Breast epithelium (tissue), 4 donors: ENCODE measurements at regions of chr16 and their contacts with region 1.

Region 1: DNA sequence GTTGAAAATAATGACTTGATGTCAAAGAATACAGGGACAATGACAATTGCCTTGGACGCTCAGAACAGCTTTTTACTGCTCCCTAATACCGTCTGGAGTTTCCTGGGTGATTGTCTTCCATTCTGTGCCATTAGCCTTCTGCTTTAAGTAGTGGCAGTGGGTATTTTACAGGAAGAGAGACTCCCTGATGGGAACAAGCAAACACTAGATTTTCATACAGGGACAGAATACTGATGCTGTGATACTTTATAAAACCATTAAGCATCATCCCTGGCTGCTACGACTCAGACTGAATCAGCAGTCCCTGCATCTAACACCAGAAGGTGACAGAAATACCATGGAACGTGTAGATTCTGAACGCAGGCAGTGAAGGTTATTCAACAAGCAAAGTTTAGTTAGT is 635.4 kb upstream of the GOT2 start:
- DNase-seq: no peak
- H3K4me3 ChIP-seq: no peak overlapping the region
- H3K27ac ChIP-seq: no peak overlapping the region
- H3K4me1 ChIP-seq: no peaks in the 10 kb centered on the region
- H3K27me3 ChIP-seq: no peaks in the 10 kb centered on the region
- CTCF ChIP-seq: no peak
- POLR2A ChIP-seq: no peak

Region 2: DNA sequence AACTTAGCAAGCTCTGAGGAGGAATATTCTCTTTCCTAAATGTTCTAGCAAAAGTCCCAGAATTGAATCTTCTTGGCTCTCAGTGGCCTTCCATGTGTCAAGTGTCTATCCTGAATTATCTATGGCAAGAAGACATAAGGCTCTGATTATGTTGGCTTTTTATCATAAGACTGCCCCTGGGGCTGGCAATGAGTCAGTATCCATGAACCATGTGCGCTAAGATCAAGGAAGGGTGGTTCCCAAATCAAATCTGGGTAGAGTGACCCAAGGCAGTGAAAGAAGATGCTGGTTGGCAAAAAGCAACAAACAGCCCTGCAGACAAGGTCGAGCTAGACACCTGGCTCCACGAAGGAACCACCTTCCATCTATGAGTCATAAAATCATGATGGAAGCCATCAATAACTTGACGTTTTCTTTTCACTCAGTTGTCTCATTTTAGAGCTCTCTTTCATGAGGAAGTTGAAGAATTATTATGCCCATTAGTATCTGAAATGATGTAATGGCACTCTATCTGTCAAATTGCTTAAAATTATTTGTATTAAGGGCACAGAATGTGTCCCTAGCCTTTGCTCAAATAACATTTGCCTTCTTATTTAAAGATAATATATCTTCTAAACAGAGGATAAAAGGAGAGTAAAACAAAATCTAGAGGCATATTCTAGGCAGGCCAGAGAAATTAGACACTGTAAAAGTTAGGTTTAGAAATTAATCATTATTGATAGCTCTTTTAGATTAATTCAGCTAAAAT is 22.3 kb after region 1 on chr16:
- intact Hi-C with region 1: loop called (anchors 2 kb)
- DNase-seq: no peak
- H3K4me3 ChIP-seq: no peak overlapping the region
- H3K27ac ChIP-seq: no peak overlapping the region
- H3K4me1 ChIP-seq: no peaks in the 10 kb centered on the region
- H3K27me3 ChIP-seq: no peaks in the 10 kb centered on the region
- CTCF ChIP-seq: no peak
- POLR2A ChIP-seq: no peak

Region 3: GRCh38 chr16:59758848-59759247 is 389.3 kb after region 1 on chr16:
- intact Hi-C with region 1: no loop called
- DNase-seq: no peak
- H3K4me3 ChIP-seq: no peak overlapping the region
- H3K27ac ChIP-seq: no peak overlapping the region
- H3K4me1 ChIP-seq: no peaks in the 10 kb centered on the region
- H3K27me3 ChIP-seq: no peaks in the 10 kb centered on the region
- CTCF ChIP-seq: no peak
- POLR2A ChIP-seq: no peak